ENCODE measurements at regions of chr3 and their contacts with region 1.

Region 1: GRCh38 chr3:124559881-124560574 is 170.2 kb upstream of the UMPS start:
- DNase-seq: peak in 1 of 2 experiments; percentile 84
- H3K4me3 ChIP-seq: no peak overlapping the region
- H3K27ac ChIP-seq: no peak overlapping the region
- H3K4me1 ChIP-seq: peaks cover 0 to 4% (median 2%) of the 10 kb centered on the region in 4 experiments; a peak in 4 of 7 replicates
- H3K27me3 ChIP-seq: no peaks in the 10 kb centered on the region
- CTCF ChIP-seq: peak; percentile 53 to 93 (median 86)
- EP300 ChIP-seq: no peak
- POLR2A ChIP-seq: no peak
- RAD21 ChIP-seq: peak; percentile 92 to 93

Region 2: GRCh38 chr3:124014366-124014942 is 545.6 kb before region 1 on chr3:
- CTCF ChIA-PET with region 1: interaction called, 15 read pairs
- POLR2A ChIA-PET with region 1: no interaction called
- DNase-seq: no peak
- H3K4me3 ChIP-seq: no peak overlapping the region
- H3K27ac ChIP-seq: no peak overlapping the region
- H3K4me1 ChIP-seq: no peaks in the 10 kb centered on the region
- H3K27me3 ChIP-seq: no peaks in the 10 kb centered on the region
- CTCF ChIP-seq: no peak
- EP300 ChIP-seq: no peak
- POLR2A ChIP-seq: no peak
- RAD21 ChIP-seq: no peak

Region 3: GRCh38 chr3:124486324-124486723 is 73.7 kb before region 1 on chr3:
- CTCF ChIA-PET with region 1: interaction called, 29 read pairs
- POLR2A ChIA-PET with region 1: no interaction called
- DNase-seq: no peak
- H3K4me3 ChIP-seq: no peak overlapping the region
- H3K27ac ChIP-seq: no peak overlapping the region
- H3K4me1 ChIP-seq: no peaks in the 10 kb centered on the region
- H3K27me3 ChIP-seq: no peaks in the 10 kb centered on the region
- CTCF ChIP-seq: peak in 2 of 3 experiments; percentile 31 to 54; a peak in 2 of 4 replicates
- EP300 ChIP-seq: no peak
- POLR2A ChIP-seq: no peak
- RAD21 ChIP-seq: peak; percentile 34 to 56; a peak in 3 of 4 replicates

Region 4: DNA sequence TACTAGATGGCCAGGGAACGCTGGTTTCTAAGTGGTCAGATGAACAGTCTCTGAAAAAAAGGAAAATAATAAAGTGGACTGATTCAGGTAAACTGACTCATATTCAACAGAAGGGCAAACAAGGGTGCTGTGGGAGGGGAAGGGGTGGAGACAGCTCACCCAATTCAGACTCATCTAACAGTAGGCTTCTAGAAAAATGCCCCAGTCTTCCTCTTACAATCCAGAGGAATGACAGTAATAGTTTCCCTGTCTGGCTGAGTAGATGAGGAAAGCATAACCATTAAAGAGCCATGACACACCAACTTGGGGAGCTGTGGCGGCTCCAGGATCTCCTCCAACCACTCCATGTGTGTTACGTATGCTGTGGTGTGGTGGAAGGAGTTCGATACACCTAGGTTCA is 61.1 kb before region 1 on chr3:
- CTCF ChIA-PET with region 1: interaction called, 12 read pairs
- POLR2A ChIA-PET with region 1: no interaction called
- DNase-seq: no peak
- H3K4me3 ChIP-seq: no peak overlapping the region
- H3K27ac ChIP-seq: no peak overlapping the region
- H3K4me1 ChIP-seq: no peaks in the 10 kb centered on the region
- H3K27me3 ChIP-seq: peaks cover 0 to 2% (median 0%) of the 10 kb centered on the region in 4 experiments; a peak in 1 of 7 replicates
- CTCF ChIP-seq: no peak
- EP300 ChIP-seq: no peak
- POLR2A ChIP-seq: no peak
- RAD21 ChIP-seq: no peak

Region 5: DNA sequence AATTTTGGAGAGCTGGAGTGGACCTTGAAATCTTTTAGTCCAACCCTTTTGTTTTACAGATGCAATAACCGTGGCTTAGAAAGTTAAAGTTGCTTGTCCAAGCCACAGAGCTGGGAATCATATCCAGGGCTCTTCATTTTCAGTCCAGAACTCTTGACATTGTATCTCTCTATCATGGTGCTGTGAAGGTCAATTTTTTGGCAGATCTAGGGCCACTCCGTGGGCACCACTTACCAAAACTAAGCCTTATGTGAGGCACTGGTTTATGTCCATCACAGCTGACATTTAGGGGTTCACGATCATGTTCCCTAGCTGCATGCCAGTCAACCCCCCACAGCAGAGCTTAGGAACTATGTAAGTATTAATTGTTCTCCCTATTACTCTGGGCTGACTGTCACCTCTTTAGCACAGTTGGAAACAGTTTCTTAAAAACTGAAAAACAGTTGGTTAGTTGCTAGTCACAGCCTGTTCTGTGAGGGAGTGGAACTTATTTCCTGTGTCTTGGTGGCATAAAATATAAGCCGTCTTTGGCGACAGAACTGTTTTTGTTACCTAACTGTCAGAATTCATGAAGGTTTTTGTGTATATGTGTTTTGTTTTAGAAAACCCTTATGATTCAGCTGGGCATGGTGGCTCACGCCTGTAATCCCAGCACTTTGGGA is 19.3 kb before region 1 on chr3:
- CTCF ChIA-PET with region 1: interaction called, 73 read pairs
- POLR2A ChIA-PET with region 1: no interaction called
- DNase-seq: no peak
- H3K4me3 ChIP-seq: no peak overlapping the region
- H3K27ac ChIP-seq: no peak overlapping the region
- H3K4me1 ChIP-seq: peaks cover 0 to 3% (median under 1%) of the 10 kb centered on the region in 4 experiments; a peak in 2 of 7 replicates
- H3K27me3 ChIP-seq: no peaks in the 10 kb centered on the region
- CTCF ChIP-seq: no peak
- EP300 ChIP-seq: no peak
- POLR2A ChIP-seq: no peak
- RAD21 ChIP-seq: no peak

Region 6: DNA sequence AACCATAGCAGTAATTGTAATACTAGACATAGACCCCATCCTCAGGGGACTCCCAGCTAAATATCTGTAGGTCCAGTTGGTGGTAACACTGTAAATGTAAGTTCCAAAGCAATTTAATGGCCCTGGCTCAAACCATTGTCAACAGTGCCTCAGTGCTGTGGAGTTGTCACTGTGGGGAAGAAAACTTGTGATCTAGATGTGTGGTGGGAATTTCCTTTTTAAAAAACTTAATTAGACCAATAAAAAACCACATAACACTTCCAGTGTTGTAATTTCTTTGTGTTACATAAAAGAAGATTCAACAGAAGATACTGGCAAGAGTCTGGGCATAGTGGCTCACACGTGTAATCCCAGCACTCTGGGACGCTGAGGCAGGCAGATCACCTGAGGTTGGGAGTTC is 31.7 kb after region 1 on chr3:
- CTCF ChIA-PET with region 1: no interaction called
- POLR2A ChIA-PET with region 1: no interaction called
- DNase-seq: no peak
- H3K4me3 ChIP-seq: no peak overlapping the region
- H3K27ac ChIP-seq: no peak overlapping the region
- H3K4me1 ChIP-seq: peaks cover 4 to 14% (median 10%) of the 10 kb centered on the region in 4 experiments
- H3K27me3 ChIP-seq: peaks cover 0 to 2% (median 2%) of the 10 kb centered on the region in 4 experiments; a peak in 5 of 7 replicates
- CTCF ChIP-seq: no peak
- EP300 ChIP-seq: no peak
- POLR2A ChIP-seq: no peak
- RAD21 ChIP-seq: no peak

Region 7: DNA sequence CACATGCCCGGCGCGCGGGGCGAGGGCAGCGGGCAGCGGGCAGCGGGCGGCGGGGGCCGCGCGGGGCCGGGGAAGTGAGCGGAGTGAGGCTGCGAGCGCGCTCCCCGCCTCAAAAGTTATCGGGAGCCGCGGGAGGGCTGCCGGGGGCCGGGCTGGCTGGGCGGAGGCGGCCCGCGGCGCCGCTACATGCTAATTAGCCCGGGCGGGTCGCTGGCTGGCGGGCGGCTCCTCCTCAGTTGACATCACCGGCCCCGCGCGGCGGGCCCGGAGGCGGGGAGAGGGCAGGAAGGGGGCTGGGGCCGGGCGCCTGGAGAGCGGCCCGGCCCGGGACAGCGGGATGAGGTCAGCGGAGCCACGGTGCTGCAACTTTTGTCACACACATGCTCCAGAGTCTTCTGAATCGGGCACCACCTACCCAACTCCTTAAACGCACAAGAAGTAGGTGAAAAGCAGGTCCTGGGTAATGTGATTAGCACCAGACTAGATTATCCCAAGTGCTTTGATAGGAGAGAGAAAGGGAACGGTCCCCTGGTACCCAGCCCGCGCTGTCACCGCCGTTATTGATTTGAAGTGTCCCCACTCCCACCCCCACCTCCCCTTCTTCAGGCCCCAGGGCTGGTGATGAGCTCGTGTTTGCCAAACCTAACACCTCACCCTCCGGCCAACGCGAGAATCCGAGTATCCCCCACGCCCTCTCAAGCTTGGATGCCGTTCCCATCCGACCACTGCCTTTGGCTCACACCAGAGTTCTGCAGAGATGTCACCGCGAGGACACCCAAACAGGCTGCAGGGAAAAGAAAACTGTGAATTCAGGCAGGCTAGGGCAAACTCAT is 496.1 kb after region 1 on chr3 and contains the start of gene HEG1:
- CTCF ChIA-PET with region 1: no interaction called
- POLR2A ChIA-PET with region 1: no interaction called
- DNase-seq: peak in 1 of 2 experiments; percentile 83
- H3K4me3 ChIP-seq: peak within 1 kb of the TSS; percentile 56 to 77 (median 58)
- H3K27ac ChIP-seq: no peak within 1 kb of the TSS
- H3K4me1 ChIP-seq: peaks cover 17 to 33% (median 26%) of the 10 kb centered on the region in 4 experiments
- H3K27me3 ChIP-seq: peaks cover 7 to 30% (median 19%) of the 10 kb centered on the region in 4 experiments
- CTCF ChIP-seq: no peak
- EP300 ChIP-seq: no peak
- POLR2A ChIP-seq: no peak
- RAD21 ChIP-seq: no peak
- total RNA-seq, gene HEG1: 9.7 and 13.1 TPM in 2 replicates

Measured in H1 (cell line).